ENCODE measurements at regions of chr1 and their contacts with region 1.

Region 1: GRCh38 chr1:29542548-29542947 is 306.2 kb downstream of the PTPRU start:
- DNase-seq: no peak
- ATAC-seq: no peak

Region 2: GRCh38 chr1:31272369-31272768 is 1729.8 kb after region 1 on chr1:
- intact Hi-C with region 1: loop called (anchors 5 kb)
- DNase-seq: no peak
- ATAC-seq: no peak